ENCODE measurements at regions of chr6 and their contacts with region 1.

Region 1: GRCh38 chr6:42453031-42453653 is 1.4 kb upstream of the TRERF1 start:
- DNase-seq: peak; percentile 69
- ATAC-seq: peak; percentile 88
- H3K4me3 ChIP-seq: peak overlapping the region; percentile 80 to 89
- H3K27ac ChIP-seq: peak overlapping the region; percentile 97
- H3K4me1 ChIP-seq: peaks cover 15 to 25% of the 10 kb centered on the region in 2 experiments
- H3K27me3 ChIP-seq: no peaks in the 10 kb centered on the region
- CTCF ChIP-seq: no peak
- POLR2A ChIP-seq: peak; percentile 19
- RAD21 ChIP-seq: peak; percentile 38

Region 2: DNA sequence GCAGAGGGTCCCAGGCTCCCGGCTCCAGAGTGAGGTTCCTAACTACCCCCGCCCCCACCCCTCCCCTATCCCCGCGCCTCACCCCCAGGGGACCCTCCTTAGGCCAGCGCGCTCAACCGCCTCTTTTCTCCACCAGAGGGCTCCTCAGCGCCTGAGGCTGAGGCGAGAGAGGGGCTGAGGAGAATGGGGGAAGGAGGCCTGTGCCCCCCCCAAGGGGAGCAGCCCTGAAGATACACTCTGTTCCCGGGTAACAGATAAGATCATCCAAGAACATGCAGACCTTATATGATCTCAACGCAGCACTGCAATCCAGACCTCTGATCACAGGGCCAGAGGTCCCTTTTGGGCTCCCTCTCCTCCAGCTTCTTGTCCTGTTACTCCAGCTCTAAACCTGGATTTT is 192.2 kb before region 1 on chr6:
- CTCF ChIA-PET with region 1: interaction called, 3 read pairs
- POLR2A ChIA-PET with region 1: interaction called, 3 read pairs
- RAD21 ChIA-PET with region 1: no interaction called
- intact Hi-C with region 1: loop called (anchors 5 kb)
- DNase-seq: no peak
- ATAC-seq: peak; percentile 84
- H3K4me3 ChIP-seq: peak overlapping the region; percentile 60 to 62
- H3K27ac ChIP-seq: peak overlapping the region; percentile 56
- H3K4me1 ChIP-seq: peaks cover 8 to 23% of the 10 kb centered on the region in 2 experiments; a peak in 3 of 4 replicates
- H3K27me3 ChIP-seq: no peaks in the 10 kb centered on the region
- CTCF ChIP-seq: peak; percentile 50 to 62 (median 58); a peak in 4 of 6 replicates
- POLR2A ChIP-seq: no peak
- RAD21 ChIP-seq: peak; percentile 76

Region 3: GRCh38 chr6:42338663-42339218 is 114.4 kb before region 1 on chr6:
- CTCF ChIA-PET with region 1: no interaction called
- POLR2A ChIA-PET with region 1: no interaction called
- RAD21 ChIA-PET with region 1: no interaction called
- intact Hi-C with region 1: loop called (anchors 5 kb)
- DNase-seq: peak; percentile 83
- ATAC-seq: peak; percentile 87
- H3K4me3 ChIP-seq: peak overlapping the region in 1 of 2 experiments; percentile 10; a peak in 1 of 4 replicates
- H3K27ac ChIP-seq: peak overlapping the region; percentile 53
- H3K4me1 ChIP-seq: peaks cover 30 to 34% of the 10 kb centered on the region in 2 experiments
- H3K27me3 ChIP-seq: no peaks in the 10 kb centered on the region
- CTCF ChIP-seq: no peak; a peak in 1 of 6 replicates
- POLR2A ChIP-seq: no peak
- RAD21 ChIP-seq: no peak; the same call in 1 of the 2 replicates

Region 4: GRCh38 chr6:42441697-42442081 is 11.5 kb before region 1 on chr6:
- CTCF ChIA-PET with region 1: no interaction called
- POLR2A ChIA-PET with region 1: interaction called, 11 read pairs
- RAD21 ChIA-PET with region 1: no interaction called
- intact Hi-C with region 1: no loop called
- DNase-seq: no peak
- ATAC-seq: no peak
- H3K4me3 ChIP-seq: no peak overlapping the region
- H3K27ac ChIP-seq: no peak overlapping the region
- H3K4me1 ChIP-seq: no peaks in the 10 kb centered on the region
- H3K27me3 ChIP-seq: no peaks in the 10 kb centered on the region
- CTCF ChIP-seq: no peak
- POLR2A ChIP-seq: no peak
- RAD21 ChIP-seq: no peak

Region 5: GRCh38 chr6:42532038-42532669 is 79.0 kb after region 1 on chr6:
- CTCF ChIA-PET with region 1: interaction called, 4 read pairs
- POLR2A ChIA-PET with region 1: no interaction called
- RAD21 ChIA-PET with region 1: interaction called in 1 of 2 experiments, 6 read pairs
- intact Hi-C with region 1: loop called (anchors 5 kb)
- DNase-seq: peak; percentile 79
- ATAC-seq: peak; percentile 96
- H3K4me3 ChIP-seq: no peak overlapping the region
- H3K27ac ChIP-seq: no peak overlapping the region
- H3K4me1 ChIP-seq: no peaks in the 10 kb centered on the region
- H3K27me3 ChIP-seq: no peaks in the 10 kb centered on the region
- CTCF ChIP-seq: peak; percentile 85 to 95 (median 93)
- POLR2A ChIP-seq: no peak
- RAD21 ChIP-seq: peak; percentile 81

Measured in HCT116 (cell line).